T-cell (primary cell): ENCODE measurements at regions of chrX and their contacts with region 1.

Region 1: DNA sequence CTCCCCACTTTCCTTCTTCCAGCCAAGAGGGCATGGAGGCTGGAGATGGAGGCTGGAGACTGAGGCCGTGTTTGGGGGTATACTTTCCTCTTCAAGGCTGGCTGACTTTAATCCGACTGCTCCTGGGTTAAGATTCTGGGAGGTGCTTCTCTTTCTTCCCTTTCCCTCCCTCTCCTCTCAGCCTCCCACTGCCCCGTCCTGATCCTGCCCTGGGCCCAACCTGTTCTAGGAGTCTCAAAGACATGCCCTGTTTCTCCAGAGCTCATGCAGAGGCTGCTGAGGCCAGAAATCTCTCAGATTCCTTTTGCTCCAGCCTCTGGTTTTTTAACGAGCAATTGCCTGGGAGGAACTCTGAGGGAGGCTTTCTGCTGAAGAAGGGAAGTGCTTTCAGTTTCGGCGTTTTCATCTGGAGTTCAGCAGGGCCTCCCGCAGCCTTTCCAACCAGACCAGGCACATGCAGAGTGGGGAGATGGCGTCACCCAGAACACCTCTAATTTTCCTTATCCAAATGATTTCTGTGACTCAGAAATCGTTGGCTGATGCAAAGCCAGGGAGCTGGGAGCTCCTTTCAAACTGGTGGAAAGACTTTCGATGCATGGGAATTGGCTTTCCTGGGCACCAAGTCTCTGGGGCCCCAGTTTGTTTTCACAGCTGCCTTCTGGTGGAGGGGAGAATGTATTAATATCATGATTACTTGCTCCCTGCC is 34.5 kb upstream of the FAM9C start:
- DNase-seq: peak in 1 of 35 experiments; percentile 43
- ATAC-seq: no peak
- H3K4me3 ChIP-seq: peak overlapping the region in 1 of 2 donors; percentile 10
- H3K4me3 Mint-ChIP-seq: peak overlapping the region; percentile 51 to 77 (median 54)
- H3K27ac ChIP-seq: peak overlapping the region; percentile 85
- H3K27ac Mint-ChIP-seq: peak overlapping the region; percentile 97 to 99
- H3K4me1 ChIP-seq: peaks cover 33 to 64% of the 10 kb centered on the region in 2 experiments
- H3K4me1 Mint-ChIP-seq: peaks cover 90 to 91% (median 91%) of the 10 kb centered on the region in 3 donors
- H3K27me3 ChIP-seq: no peaks in the 10 kb centered on the region
- H3K27me3 Mint-ChIP-seq: peaks cover 0 to 25% of the 10 kb centered on the region in 2 donors

Region 2: GRCh38 chrX:12610079-12610478 is 468.8 kb before region 1 on chrX:
- CTCF ChIA-PET with region 1: no interaction called
- POLR2A ChIA-PET with region 1: no interaction called
- DNase-seq: no peak
- ATAC-seq: no peak
- H3K4me3 ChIP-seq: no peak overlapping the region
- H3K4me3 Mint-ChIP-seq: no peak overlapping the region
- H3K27ac ChIP-seq: no peak overlapping the region
- H3K27ac Mint-ChIP-seq: no peak overlapping the region
- H3K4me1 ChIP-seq: no peaks in the 10 kb centered on the region
- H3K4me1 Mint-ChIP-seq: no peaks in the 10 kb centered on the region
- H3K27me3 ChIP-seq: no peaks in the 10 kb centered on the region
- H3K27me3 Mint-ChIP-seq: peaks cover 0 to 7% of the 10 kb centered on the region in 2 donors

Region 3: DNA sequence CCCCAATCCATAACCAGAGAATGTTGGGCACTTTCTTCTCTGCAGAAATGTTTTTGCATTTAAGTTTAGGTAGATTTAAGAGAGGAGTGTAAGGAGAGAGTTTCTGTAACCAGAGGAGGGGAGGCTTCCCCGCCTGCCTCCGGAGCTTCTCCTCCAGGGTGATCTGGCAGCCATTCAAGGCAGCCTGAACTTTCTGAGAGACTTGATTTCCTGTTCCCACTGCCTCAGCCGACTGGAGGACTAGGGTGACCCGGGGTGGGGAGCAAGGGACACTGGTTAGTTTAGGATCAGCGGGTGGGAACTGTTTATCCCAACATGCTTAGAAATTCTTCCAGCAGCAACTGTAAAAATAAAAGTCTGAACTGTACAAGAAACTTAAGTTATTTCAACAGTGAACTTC is 49.6 kb before region 1 on chrX:
- CTCF ChIA-PET with region 1: interaction called in 1 of 2 experiments, 11 read pairs
- POLR2A ChIA-PET with region 1: interaction called in 1 of 2 experiments, 3 read pairs
- DNase-seq: peak in 11 of 35 experiments; percentile 4 to 43 (median 10)
- ATAC-seq: peak in 3 of 4 experiments; percentile 41 to 46 (median 45)
- H3K4me3 ChIP-seq: no peak overlapping the region
- H3K4me3 Mint-ChIP-seq: peak overlapping the region in 2 of 3 donors; percentile 6 to 64
- H3K27ac ChIP-seq: peak overlapping the region; percentile 67
- H3K27ac Mint-ChIP-seq: peak overlapping the region; percentile 94 to 99
- H3K4me1 ChIP-seq: peaks cover 49 to 51% of the 10 kb centered on the region in 2 experiments
- H3K4me1 Mint-ChIP-seq: peaks cover 71 to 81% (median 75%) of the 10 kb centered on the region in 3 donors
- H3K27me3 ChIP-seq: no peaks in the 10 kb centered on the region
- H3K27me3 Mint-ChIP-seq: peaks cover 0 to 46% of the 10 kb centered on the region in 2 donors

Region 4: DNA sequence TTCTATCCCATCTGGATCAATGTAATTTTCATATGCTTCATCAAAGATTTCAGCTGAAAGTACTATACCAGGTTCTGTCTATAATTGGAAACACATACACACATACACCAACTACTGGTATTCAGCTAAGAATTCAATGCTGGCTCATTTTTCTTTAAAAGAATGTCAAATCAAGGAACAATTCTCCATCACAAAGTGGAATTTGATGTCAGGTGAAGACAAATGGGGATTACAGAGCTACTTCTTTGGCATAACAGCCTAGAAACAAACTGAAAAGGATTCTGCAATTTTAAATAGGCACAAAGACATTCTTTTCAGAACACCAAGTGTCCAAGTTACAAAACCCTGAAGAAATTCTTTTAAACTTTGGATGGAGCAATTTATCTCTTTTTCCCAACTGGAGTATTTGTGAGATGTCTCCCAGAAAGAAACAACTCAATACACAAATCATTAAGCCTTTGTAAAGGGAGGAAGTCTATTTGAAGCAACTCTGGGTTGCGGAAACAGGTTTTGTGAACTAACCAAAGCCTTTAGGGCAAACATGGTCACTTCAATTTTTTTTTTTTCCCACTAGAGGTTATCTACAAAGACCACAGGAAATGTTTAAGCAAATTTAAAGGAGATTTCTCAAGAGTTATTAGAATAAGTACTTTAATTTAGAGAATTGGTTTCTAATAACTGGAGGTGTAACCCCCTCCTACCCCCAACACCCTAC is 32.6 kb before region 1 on chrX:
- CTCF ChIA-PET with region 1: interaction called, 3 to 11 read pairs
- POLR2A ChIA-PET with region 1: interaction called, 9 to 10 read pairs
- DNase-seq: no peak
- ATAC-seq: no peak
- H3K4me3 ChIP-seq: no peak overlapping the region
- H3K4me3 Mint-ChIP-seq: no peak overlapping the region
- H3K27ac ChIP-seq: no peak overlapping the region
- H3K27ac Mint-ChIP-seq: peak overlapping the region; percentile 86 to 89
- H3K4me1 ChIP-seq: peaks cover 15 to 31% of the 10 kb centered on the region in 2 experiments
- H3K4me1 Mint-ChIP-seq: peaks cover 61 to 66% (median 62%) of the 10 kb centered on the region in 3 donors
- H3K27me3 ChIP-seq: no peaks in the 10 kb centered on the region
- H3K27me3 Mint-ChIP-seq: peaks cover 0 to 15% of the 10 kb centered on the region in 2 donors

Region 5: DNA sequence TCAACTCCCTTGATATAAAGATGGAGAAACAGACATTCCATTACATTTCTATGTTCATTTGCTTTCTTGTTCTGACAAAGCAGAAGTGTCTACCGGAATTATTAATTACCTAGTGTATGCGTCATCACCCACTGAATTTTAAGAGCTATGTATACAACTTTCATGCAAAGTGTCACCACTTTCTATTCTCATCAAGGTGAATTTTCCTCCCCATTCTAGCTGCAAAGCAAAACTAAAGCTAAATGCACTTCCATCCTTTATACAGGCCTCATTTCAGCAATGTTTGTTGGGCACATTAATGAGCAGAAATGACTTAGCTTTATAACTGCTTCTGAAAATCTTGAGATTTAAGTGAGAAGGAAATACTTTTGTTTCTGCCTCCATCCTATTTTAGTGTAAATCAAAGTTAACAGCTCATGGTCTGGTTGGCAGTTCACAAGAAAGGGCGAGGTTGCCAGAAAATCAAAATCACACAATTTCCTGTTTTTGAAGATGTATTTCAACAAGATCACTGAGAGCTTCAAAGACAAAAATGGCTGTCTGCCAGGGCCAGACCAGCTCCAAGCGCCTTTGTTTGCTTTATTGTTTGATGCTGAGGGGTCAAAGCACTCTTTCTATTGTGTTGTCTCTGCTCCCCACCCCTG is 27.2 kb before region 1 on chrX:
- CTCF ChIA-PET with region 1: interaction called, 3 to 11 read pairs
- POLR2A ChIA-PET with region 1: interaction called, 6 to 9 read pairs
- DNase-seq: peak in 32 of 35 experiments; percentile 18 to 74 (median 43)
- ATAC-seq: peak; percentile 76 to 90 (median 86)
- H3K4me3 ChIP-seq: no peak overlapping the region
- H3K4me3 Mint-ChIP-seq: peak overlapping the region; percentile 3 to 60 (median 50)
- H3K27ac ChIP-seq: peak overlapping the region; percentile 91
- H3K27ac Mint-ChIP-seq: peak overlapping the region; percentile 87 to 98
- H3K4me1 ChIP-seq: peaks cover 27 to 55% of the 10 kb centered on the region in 2 experiments
- H3K4me1 Mint-ChIP-seq: peaks cover 79 to 86% (median 82%) of the 10 kb centered on the region in 3 donors
- H3K27me3 ChIP-seq: no peaks in the 10 kb centered on the region
- H3K27me3 Mint-ChIP-seq: peaks cover 0 to 12% of the 10 kb centered on the region in 2 donors

Region 6: DNA sequence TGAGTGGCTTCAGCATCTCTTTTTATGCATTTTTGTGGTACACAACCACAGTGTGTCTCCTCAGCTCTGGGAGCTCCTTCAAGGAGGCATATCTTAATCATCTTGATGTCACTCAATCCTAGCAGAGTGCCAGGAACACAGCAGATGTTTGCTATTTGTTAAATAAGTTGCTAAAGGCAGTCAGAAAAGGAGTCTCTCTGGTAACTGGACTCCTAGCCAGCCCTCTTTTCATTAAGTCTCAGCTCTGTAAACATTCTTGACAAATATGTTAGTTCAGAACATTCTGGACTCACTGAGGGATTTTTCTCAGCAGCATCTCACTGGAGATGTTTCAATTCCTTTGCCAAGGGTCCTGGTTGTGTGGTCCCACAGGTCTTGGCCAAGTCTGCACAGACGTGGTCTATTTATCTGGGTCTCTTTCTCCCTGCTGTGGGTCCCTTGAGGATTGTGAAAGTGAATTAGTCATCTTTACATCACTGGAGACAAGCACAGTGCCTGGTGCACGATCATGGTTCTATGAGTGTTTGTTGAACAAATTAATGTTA is 14.2 kb before region 1 on chrX:
- CTCF ChIA-PET with region 1: interaction called in 1 of 2 experiments, 10 read pairs
- POLR2A ChIA-PET with region 1: interaction called in 1 of 2 experiments, 3 read pairs
- DNase-seq: no peak
- ATAC-seq: no peak
- H3K4me3 ChIP-seq: no peak overlapping the region
- H3K4me3 Mint-ChIP-seq: no peak overlapping the region
- H3K27ac ChIP-seq: no peak overlapping the region
- H3K27ac Mint-ChIP-seq: peak overlapping the region in 1 of 2 donors; percentile 28
- H3K4me1 ChIP-seq: peaks cover 2 to 17% of the 10 kb centered on the region in 2 experiments
- H3K4me1 Mint-ChIP-seq: peaks cover 32 to 49% (median 39%) of the 10 kb centered on the region in 3 donors
- H3K27me3 ChIP-seq: no peaks in the 10 kb centered on the region
- H3K27me3 Mint-ChIP-seq: peaks cover 0 to 14% of the 10 kb centered on the region in 2 donors

Region 7: GRCh38 chrX:13101441-13102139 is 22.7 kb after region 1 on chrX:
- CTCF ChIA-PET with region 1: no interaction called
- POLR2A ChIA-PET with region 1: no interaction called
- DNase-seq: peak in 7 of 35 experiments; percentile 21 to 63 (median 40)
- ATAC-seq: peak; percentile 84 to 99 (median 93)
- H3K4me3 ChIP-seq: no peak overlapping the region
- H3K4me3 Mint-ChIP-seq: peak overlapping the region in 2 of 3 donors; percentile 28 to 35
- H3K27ac ChIP-seq: peak overlapping the region; percentile 53
- H3K27ac Mint-ChIP-seq: peak overlapping the region; percentile 66 to 90
- H3K4me1 ChIP-seq: peaks cover 5 to 12% of the 10 kb centered on the region in 2 experiments
- H3K4me1 Mint-ChIP-seq: peaks cover 43 to 60% (median 51%) of the 10 kb centered on the region in 3 donors
- H3K27me3 ChIP-seq: no peaks in the 10 kb centered on the region
- H3K27me3 Mint-ChIP-seq: peaks cover 0 to 45% of the 10 kb centered on the region in 2 donors

Region 8: GRCh38 chrX:13398073-13398823 is 319.4 kb after region 1 on chrX:
- CTCF ChIA-PET with region 1: no interaction called
- POLR2A ChIA-PET with region 1: no interaction called
- DNase-seq: no peak
- ATAC-seq: no peak
- H3K4me3 ChIP-seq: no peak overlapping the region
- H3K4me3 Mint-ChIP-seq: no peak overlapping the region
- H3K27ac ChIP-seq: no peak overlapping the region
- H3K27ac Mint-ChIP-seq: no peak overlapping the region
- H3K4me1 ChIP-seq: no peaks in the 10 kb centered on the region
- H3K4me1 Mint-ChIP-seq: no peaks in the 10 kb centered on the region
- H3K27me3 ChIP-seq: no peaks in the 10 kb centered on the region
- H3K27me3 Mint-ChIP-seq: peaks cover 0 to 20% of the 10 kb centered on the region in 2 donors

Region 9: GRCh38 chrX:13734278-13735172 is 655.6 kb after region 1 on chrX and contains the starts of genes OFD1 and TRAPPC2:
- CTCF ChIA-PET with region 1: no interaction called
- POLR2A ChIA-PET with region 1: no interaction called
- DNase-seq: peak; percentile 78 to 94 (median 86)
- ATAC-seq: peak; percentile 91 to 93 (median 93)
- H3K4me3 ChIP-seq: peak within 1 kb of the TSS; percentile 83 to 92
- H3K4me3 Mint-ChIP-seq: peak within 1 kb of the TSS; percentile 83 to 94 (median 89)
- H3K27ac ChIP-seq: peak within 1 kb of the TSS; percentile 98
- H3K27ac Mint-ChIP-seq: peak within 1 kb of the TSS; percentile 91 to 98
- H3K4me1 ChIP-seq: peaks cover 12 to 15% of the 10 kb centered on the region in 2 experiments
- H3K4me1 Mint-ChIP-seq: peaks cover 47 to 67% (median 66%) of the 10 kb centered on the region in 3 donors
- H3K27me3 ChIP-seq: no peaks in the 10 kb centered on the region
- H3K27me3 Mint-ChIP-seq: peaks cover 0 to 7% of the 10 kb centered on the region in 2 donors
- total RNA-seq, gene OFD1: 78.8 to 96.8 (median 89.3) TPM
- total RNA-seq, gene TRAPPC2: 24.8 to 32.9 (median 29.7) TPM